Activated CD4-positive, alpha-beta T cell treated with anti-CD3 and anti-CD28 coated beads for 36 hours (primary cell): ENCODE measurements at regions of chr7 and their contacts with region 1.

Region 1: DNA sequence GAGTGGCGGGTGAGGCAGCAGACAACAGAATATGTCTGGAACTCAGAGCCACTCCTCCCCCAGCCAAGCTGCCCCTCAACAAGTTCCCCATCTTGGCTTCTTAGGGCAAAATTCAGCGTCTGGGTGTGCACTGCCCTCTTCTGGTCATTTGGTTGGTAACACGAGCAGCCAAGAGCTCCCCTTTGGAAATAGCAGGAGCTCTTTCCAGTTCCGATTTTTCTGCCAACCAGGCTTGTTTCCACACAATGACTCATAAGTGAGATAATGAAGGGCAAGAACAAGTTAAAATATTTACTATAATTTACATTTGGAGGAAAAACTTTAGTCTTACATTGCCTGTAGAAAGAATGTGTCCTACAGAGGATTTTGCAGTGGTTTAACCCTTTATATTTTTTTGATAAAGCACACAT is 70.5 kb downstream of the ADCYAP1R1 start:
- DNase-seq: peak; percentile 67
- ATAC-seq: peak; percentile 61
- H3K4me3 Mint-ChIP-seq: no peak overlapping the region
- H3K27ac Mint-ChIP-seq: no peak overlapping the region
- H3K4me1 Mint-ChIP-seq: no peaks in the 10 kb centered on the region
- H3K27me3 Mint-ChIP-seq: peaks cover 4% of the 10 kb centered on the region

Region 2: DNA sequence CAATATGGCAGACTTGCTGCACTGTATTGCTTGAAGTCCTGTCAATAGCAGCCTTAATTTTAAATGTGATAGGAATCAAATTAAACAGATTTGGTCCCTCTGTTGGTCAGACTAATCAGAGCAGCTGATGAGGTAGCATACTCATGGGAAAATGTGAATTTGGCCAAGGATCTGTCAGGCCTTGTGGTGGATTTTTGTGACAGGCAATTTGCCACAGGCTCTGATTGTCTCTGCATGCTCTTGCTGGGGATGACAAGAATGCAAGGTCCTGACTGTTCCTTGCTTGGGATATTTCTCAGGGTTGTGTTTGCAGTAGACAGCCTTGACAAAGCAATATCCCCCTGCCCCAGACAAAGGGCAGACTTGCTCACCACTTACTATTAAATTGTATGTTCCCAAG is 569.5 kb before region 1 on chr7:
- CTCF ChIA-PET with region 1: no interaction called
- POLR2A ChIA-PET with region 1: no interaction called
- intact Hi-C with region 1: no loop called
- DNase-seq: no peak
- ATAC-seq: no peak
- H3K4me3 Mint-ChIP-seq: no peak overlapping the region
- H3K27ac Mint-ChIP-seq: no peak overlapping the region
- H3K4me1 Mint-ChIP-seq: peaks cover 7% of the 10 kb centered on the region
- H3K27me3 Mint-ChIP-seq: no peaks in the 10 kb centered on the region

Region 3: DNA sequence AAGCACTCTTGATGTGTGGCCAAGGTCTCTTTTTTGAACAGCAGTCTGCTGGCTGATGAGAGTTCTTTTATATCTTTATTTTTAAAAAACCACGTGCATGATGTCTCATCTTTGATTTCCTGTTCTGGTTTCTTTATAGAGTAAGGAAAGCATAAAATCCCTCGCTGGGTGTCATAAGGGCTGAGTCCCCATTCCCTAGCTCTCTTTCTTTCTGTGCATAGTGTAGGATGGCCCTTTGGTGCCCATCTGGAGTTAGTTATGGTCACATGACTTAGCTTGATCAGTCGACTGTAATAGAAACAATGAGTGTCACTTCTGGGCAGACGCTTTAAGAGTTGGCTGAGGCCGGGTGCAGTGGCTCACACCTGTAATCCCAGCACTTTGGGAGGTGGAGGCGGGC is 120.4 kb before region 1 on chr7:
- CTCF ChIA-PET with region 1: no interaction called
- POLR2A ChIA-PET with region 1: no interaction called
- intact Hi-C with region 1: no loop called
- DNase-seq: no peak
- ATAC-seq: no peak
- H3K4me3 Mint-ChIP-seq: no peak overlapping the region
- H3K27ac Mint-ChIP-seq: no peak overlapping the region
- H3K4me1 Mint-ChIP-seq: no peaks in the 10 kb centered on the region
- H3K27me3 Mint-ChIP-seq: peaks cover 6% of the 10 kb centered on the region

Region 4: GRCh38 chr7:31043051-31043471 is 79.6 kb before region 1 on chr7:
- CTCF ChIA-PET with region 1: interaction called, 3 read pairs
- POLR2A ChIA-PET with region 1: no interaction called
- intact Hi-C with region 1: loop called in 1 of 2 experiments (anchors 10 kb)
- DNase-seq: no peak
- ATAC-seq: no peak
- H3K4me3 Mint-ChIP-seq: no peak overlapping the region
- H3K27ac Mint-ChIP-seq: no peak overlapping the region
- H3K4me1 Mint-ChIP-seq: no peaks in the 10 kb centered on the region
- H3K27me3 Mint-ChIP-seq: peaks cover 30% of the 10 kb centered on the region

Region 5: GRCh38 chr7:31106303-31107120 is 16.1 kb before region 1 on chr7:
- CTCF ChIA-PET with region 1: interaction called, 11 read pairs
- POLR2A ChIA-PET with region 1: no interaction called
- intact Hi-C with region 1: no loop called
- DNase-seq: no peak
- ATAC-seq: no peak
- H3K4me3 Mint-ChIP-seq: no peak overlapping the region
- H3K27ac Mint-ChIP-seq: no peak overlapping the region
- H3K4me1 Mint-ChIP-seq: no peaks in the 10 kb centered on the region
- H3K27me3 Mint-ChIP-seq: no peaks in the 10 kb centered on the region

Region 6: DNA sequence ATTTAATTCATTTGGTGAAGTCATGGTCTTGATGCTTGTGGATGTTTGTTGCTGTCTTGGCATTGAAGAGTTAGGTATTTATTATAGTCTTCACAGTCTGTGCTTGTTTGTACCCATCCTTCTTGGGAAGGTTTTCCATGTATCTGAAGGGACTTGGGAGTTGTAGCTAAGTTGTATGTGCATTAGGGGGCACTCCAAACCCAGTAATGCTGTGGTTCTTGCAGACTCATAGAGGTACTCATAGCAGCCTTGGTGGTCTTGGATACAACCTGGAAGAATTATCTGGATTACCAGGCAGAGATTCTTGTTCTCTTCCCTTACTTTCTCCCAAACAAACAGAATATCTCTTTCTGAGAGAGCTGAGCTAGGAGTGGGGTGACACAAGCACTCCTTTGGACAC is 22.7 kb after region 1 on chr7:
- CTCF ChIA-PET with region 1: no interaction called
- POLR2A ChIA-PET with region 1: no interaction called
- intact Hi-C with region 1: no loop called
- DNase-seq: no peak
- ATAC-seq: no peak
- H3K4me3 Mint-ChIP-seq: no peak overlapping the region
- H3K27ac Mint-ChIP-seq: no peak overlapping the region
- H3K4me1 Mint-ChIP-seq: no peaks in the 10 kb centered on the region
- H3K27me3 Mint-ChIP-seq: peaks cover 12% of the 10 kb centered on the region